ENCODE measurements at regions of chr4 and their contacts with region 1.

Region 1: DNA sequence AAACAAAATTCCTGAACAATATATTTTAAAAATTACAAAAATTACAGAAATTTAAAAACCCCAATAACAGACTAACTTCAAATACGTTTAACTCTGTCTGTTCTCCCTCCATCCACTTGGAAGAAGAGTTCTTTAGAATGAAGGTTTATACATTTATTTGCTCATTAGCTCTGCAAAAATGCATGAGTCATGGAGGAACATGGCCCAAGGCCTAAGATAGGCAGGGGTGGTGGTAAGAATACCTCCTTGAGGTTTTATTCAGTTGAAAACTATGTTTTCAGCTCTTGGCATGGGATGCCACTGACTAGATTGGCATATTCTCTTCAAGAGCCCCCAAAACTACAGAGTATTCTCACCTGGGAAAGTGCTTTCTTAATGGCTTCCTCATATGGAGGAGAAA is 8.8 kb upstream of the LRRC66 start:
- DNase-seq: no peak

Region 2: GRCh38 chr4:51831133-51831532 is 197.8 kb before region 1 on chr4:
- intact Hi-C with region 1: loop called (anchors 2 kb)
- DNase-seq: peak in 7 of 10 donors; percentile 18 to 92 (median 66)

Region 3: GRCh38 chr4:51895813-51896408 is 133.1 kb before region 1 on chr4:
- intact Hi-C with region 1: loop called (anchors 2 kb)
- DNase-seq: peak in 8 of 10 donors; percentile 48 to 92 (median 68)

Region 4: DNA sequence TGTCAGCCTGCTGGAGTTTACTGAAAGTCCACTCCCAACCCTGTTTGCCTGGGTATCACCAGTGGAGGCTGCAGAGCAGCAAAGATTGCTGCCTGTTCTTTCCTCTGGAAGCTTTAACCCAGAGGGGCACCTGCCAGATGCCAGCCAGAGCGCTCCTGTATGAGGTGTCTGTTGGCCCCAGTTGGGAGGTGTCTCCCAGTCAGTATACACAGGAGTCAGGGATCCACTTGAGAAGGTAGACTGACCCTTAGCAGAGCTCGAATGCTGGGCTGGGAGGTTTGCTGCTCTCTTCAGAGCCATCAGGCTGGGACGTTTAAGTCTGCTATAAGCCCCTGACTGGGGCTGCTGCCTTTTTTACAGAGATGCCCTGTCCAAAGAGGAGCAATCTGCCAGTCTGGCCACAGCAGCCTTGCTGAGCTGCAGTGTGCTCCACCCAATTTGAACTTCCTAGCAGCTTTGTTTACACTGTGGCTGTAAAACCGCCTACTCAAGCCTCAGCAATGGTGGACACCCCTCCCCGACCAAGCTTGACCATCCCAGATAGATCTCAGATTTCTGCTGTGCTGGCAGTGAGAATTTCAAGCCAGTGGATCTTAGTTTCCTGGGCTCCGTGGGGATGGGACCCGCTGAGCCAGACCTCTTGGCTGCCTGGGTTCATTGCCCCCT is 62.7 kb after region 1 on chr4:
- intact Hi-C with region 1: no loop called
- DNase-seq: no peak